A673 (cell line): ENCODE measurements at regions of chr7 and their contacts with region 1.

Region 1: DNA sequence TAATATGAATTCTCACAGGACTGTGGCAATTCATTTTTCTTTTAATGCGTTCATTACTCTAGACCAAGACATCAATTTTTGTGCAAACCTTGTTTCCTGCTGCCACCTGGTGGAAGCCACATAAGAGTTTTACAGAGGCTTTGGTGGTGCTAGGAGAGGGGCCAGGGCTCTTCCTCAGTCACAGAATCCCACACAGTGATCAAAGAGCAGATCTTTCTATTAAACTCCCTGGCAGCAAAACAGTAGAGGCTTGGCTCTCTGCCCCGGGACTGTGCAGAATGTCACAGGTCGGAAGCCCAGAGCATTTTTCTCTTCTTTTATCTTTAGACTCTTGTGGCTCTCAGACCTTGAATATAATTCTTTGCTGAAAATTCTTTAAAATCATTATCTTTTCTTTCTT is 506.4 kb upstream of the C7orf33 start:
- DNase-seq: peak; percentile 76
- H3K4me3 ChIP-seq: no peak overlapping the region
- H3K27ac ChIP-seq: no peak overlapping the region
- H3K4me1 ChIP-seq: no peaks in the 10 kb centered on the region
- H3K27me3 ChIP-seq: no peaks in the 10 kb centered on the region
- CTCF ChIP-seq: peak; percentile 80

Region 2: DNA sequence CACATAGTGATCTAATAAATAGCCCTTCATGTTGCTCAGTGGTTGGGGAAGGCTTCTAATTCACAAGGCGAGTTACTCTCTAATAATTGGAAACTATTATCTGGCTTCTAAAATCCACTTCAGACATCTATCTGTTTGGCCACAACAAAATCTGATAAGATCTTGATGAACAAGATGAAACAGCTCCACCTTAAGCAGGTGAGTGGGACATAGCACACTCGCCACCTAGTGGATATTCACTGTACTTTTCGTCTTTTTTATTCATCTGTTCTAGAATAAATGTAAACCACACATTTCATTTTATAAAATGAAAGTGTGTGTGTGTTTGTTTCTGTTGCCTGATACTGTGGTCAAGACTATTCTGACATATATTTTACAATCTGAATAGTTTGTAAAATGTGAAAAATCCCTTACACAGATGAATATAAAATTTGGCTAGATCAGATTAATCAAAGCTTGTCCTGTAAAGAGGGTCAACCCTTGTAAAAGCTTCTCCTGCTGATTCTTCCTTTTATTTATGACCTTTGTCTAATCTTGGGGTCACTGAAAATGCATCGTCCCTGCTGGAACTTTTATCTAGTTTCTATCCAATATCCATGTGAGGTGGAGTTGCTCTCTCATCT is 1994.0 kb before region 1 on chr7:
- CTCF ChIA-PET with region 1: no interaction called
- POLR2A ChIA-PET with region 1: no interaction called
- intact Hi-C with region 1: loop called (anchors 10 kb)
- DNase-seq: peak; percentile 39
- H3K4me3 ChIP-seq: no peak overlapping the region
- H3K27ac ChIP-seq: no peak overlapping the region
- H3K4me1 ChIP-seq: no peaks in the 10 kb centered on the region
- H3K27me3 ChIP-seq: no peaks in the 10 kb centered on the region
- CTCF ChIP-seq: peak; percentile 73

Region 3: DNA sequence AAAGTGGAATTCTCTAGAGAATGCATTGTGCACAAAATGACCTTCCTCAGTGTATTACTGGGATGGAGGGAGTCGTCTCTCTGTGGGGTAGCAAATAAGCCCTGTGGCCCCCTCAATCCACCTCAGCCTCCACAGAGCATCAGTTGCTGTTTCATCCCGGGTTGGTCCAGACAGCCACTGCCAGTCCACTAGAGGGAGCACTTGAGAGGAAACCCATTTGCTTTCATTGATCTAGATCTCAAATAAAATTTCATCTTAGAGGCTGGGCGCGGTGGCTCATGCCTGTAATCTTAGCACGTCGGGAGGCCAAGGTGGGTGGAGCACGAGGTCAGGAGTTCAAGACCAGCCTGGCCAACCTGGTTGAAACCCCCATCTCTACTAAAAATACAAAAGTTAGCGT is 838.8 kb before region 1 on chr7:
- CTCF ChIA-PET with region 1: no interaction called
- POLR2A ChIA-PET with region 1: no interaction called
- intact Hi-C with region 1: loop called (anchors 5 kb)
- DNase-seq: peak; percentile 63
- H3K4me3 ChIP-seq: no peak overlapping the region
- H3K27ac ChIP-seq: no peak overlapping the region
- H3K4me1 ChIP-seq: no peaks in the 10 kb centered on the region
- H3K27me3 ChIP-seq: no peaks in the 10 kb centered on the region
- CTCF ChIP-seq: peak; percentile 77

Region 4: GRCh38 chr7:147432079-147432478 is 652.1 kb before region 1 on chr7:
- CTCF ChIA-PET with region 1: no interaction called
- POLR2A ChIA-PET with region 1: no interaction called
- intact Hi-C with region 1: loop called (anchors 1 kb)
- DNase-seq: peak; percentile 28
- H3K4me3 ChIP-seq: no peak overlapping the region
- H3K27ac ChIP-seq: no peak overlapping the region
- H3K4me1 ChIP-seq: no peaks in the 10 kb centered on the region
- H3K27me3 ChIP-seq: no peaks in the 10 kb centered on the region
- CTCF ChIP-seq: peak; percentile 46

Region 5: GRCh38 chr7:147547249-147547897 is 536.8 kb before region 1 on chr7:
- CTCF ChIA-PET with region 1: no interaction called
- POLR2A ChIA-PET with region 1: no interaction called
- intact Hi-C with region 1: loop called (anchors 5 kb)
- DNase-seq: peak; percentile 49
- H3K4me3 ChIP-seq: no peak overlapping the region
- H3K27ac ChIP-seq: no peak overlapping the region
- H3K4me1 ChIP-seq: no peaks in the 10 kb centered on the region
- H3K27me3 ChIP-seq: no peaks in the 10 kb centered on the region
- CTCF ChIP-seq: peak; percentile 59

Region 6: GRCh38 chr7:148135116-148135515 is 51.0 kb after region 1 on chr7:
- CTCF ChIA-PET with region 1: no interaction called
- POLR2A ChIA-PET with region 1: no interaction called
- intact Hi-C with region 1: no loop called
- DNase-seq: no peak
- H3K4me3 ChIP-seq: no peak overlapping the region
- H3K27ac ChIP-seq: no peak overlapping the region
- H3K4me1 ChIP-seq: peaks cover 30% of the 10 kb centered on the region
- H3K27me3 ChIP-seq: no peaks in the 10 kb centered on the region
- CTCF ChIP-seq: no peak